WTC11 (cell line): ENCODE measurements at regions of chr12 and their contacts with region 1.

Region 1: GRCh38 chr12:48988030-48988649 is 10.0 kb downstream of the WNT1 start:
- DNase-seq: peak; percentile 91
- ATAC-seq: peak; percentile 89
- H3K4me3 Mint-ChIP-seq: no peak overlapping the region
- H3K27ac Mint-ChIP-seq: no peak overlapping the region
- H3K4me1 Mint-ChIP-seq: peaks cover 10% of the 10 kb centered on the region
- H3K27me3 Mint-ChIP-seq: peaks cover 76% of the 10 kb centered on the region
- CTCF ChIP-seq: peak; percentile 96

Region 2: GRCh38 chr12:48851883-48852733 is 136.0 kb before region 1 on chr12 and contains the start of gene DDX23:
- CTCF ChIA-PET with region 1: interaction called, 24 read pairs
- POLR2A ChIA-PET with region 1: no interaction called
- DNase-seq: peak; percentile 93
- ATAC-seq: peak; percentile 99
- H3K4me3 Mint-ChIP-seq: peak within 1 kb of the TSS; percentile 94
- H3K27ac Mint-ChIP-seq: peak within 1 kb of the TSS; percentile 95
- H3K4me1 Mint-ChIP-seq: peaks cover 20% of the 10 kb centered on the region
- H3K27me3 Mint-ChIP-seq: no peaks in the 10 kb centered on the region
- CTCF ChIP-seq: no peak
- total RNA-seq, gene DDX23: 91.1 to 107 TPM (median 93.4 TPM) in 3 replicates

Region 3: DNA sequence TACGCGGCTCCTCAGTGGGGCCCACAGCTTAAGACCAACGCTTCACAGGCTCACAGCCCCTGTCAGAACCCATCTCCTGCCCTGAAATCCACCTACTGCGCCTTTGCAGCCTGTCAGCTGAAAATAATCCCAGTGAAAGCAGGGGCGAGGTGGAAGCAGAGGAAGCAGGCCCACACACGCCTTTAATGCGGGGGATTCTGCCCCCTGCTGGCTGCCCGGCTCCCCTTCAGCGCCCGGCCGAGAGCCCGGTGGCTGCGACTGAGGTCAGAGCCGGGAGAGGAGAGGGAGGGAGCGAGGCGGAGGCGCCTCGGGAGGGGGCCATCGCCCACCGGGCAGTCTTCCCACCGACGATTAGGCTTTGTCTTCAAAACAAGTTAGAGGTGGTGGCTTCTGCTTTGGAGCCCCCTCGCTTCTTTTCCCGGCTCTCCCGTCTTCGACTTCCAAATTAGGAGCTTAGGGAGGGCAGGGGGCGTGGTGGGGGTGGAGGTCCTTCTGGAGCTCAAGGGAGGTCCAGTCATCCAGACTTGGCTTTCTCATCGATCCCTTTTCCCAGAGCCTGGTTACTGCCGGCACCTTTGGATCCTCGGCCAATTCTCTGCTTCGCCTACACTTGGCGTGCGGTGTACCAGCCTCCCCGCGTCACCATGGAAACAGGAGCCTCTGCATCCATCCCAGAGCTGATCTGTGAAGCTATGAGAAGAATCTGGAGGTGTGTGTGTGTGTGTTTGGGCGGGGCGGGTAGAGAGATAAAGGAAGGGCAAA is 97.3 kb before region 1 on chr12:
- CTCF ChIA-PET with region 1: interaction called, 14 read pairs
- POLR2A ChIA-PET with region 1: no interaction called
- DNase-seq: peak; percentile 92
- ATAC-seq: peak; percentile 95
- H3K4me3 Mint-ChIP-seq: peak overlapping the region; percentile 70
- H3K27ac Mint-ChIP-seq: no peak overlapping the region
- H3K4me1 Mint-ChIP-seq: peaks cover 7% of the 10 kb centered on the region
- H3K27me3 Mint-ChIP-seq: peaks cover 28% of the 10 kb centered on the region
- CTCF ChIP-seq: peak; percentile 92

Region 4: GRCh38 chr12:48936379-48936979 is 51.7 kb before region 1 on chr12:
- CTCF ChIA-PET with region 1: interaction called, 17 read pairs
- POLR2A ChIA-PET with region 1: no interaction called
- DNase-seq: peak; percentile 89
- ATAC-seq: peak; percentile 88
- H3K4me3 Mint-ChIP-seq: no peak overlapping the region
- H3K27ac Mint-ChIP-seq: peak overlapping the region; percentile 46
- H3K4me1 Mint-ChIP-seq: no peaks in the 10 kb centered on the region
- H3K27me3 Mint-ChIP-seq: no peaks in the 10 kb centered on the region
- CTCF ChIP-seq: peak; percentile 70

Region 5: GRCh38 chr12:48977315-48978281 is 10.5 kb before region 1 on chr12:
- CTCF ChIA-PET with region 1: interaction called, 237 read pairs
- POLR2A ChIA-PET with region 1: no interaction called
- DNase-seq: peak; percentile 75
- ATAC-seq: peak; percentile 3
- H3K4me3 Mint-ChIP-seq: peak overlapping the region; percentile 45
- H3K27ac Mint-ChIP-seq: no peak overlapping the region
- H3K4me1 Mint-ChIP-seq: peaks cover 31% of the 10 kb centered on the region
- H3K27me3 Mint-ChIP-seq: peaks cover 100% of the 10 kb centered on the region
- CTCF ChIP-seq: peak; percentile 77; the same call in 1 of the 2 replicates

Region 6: DNA sequence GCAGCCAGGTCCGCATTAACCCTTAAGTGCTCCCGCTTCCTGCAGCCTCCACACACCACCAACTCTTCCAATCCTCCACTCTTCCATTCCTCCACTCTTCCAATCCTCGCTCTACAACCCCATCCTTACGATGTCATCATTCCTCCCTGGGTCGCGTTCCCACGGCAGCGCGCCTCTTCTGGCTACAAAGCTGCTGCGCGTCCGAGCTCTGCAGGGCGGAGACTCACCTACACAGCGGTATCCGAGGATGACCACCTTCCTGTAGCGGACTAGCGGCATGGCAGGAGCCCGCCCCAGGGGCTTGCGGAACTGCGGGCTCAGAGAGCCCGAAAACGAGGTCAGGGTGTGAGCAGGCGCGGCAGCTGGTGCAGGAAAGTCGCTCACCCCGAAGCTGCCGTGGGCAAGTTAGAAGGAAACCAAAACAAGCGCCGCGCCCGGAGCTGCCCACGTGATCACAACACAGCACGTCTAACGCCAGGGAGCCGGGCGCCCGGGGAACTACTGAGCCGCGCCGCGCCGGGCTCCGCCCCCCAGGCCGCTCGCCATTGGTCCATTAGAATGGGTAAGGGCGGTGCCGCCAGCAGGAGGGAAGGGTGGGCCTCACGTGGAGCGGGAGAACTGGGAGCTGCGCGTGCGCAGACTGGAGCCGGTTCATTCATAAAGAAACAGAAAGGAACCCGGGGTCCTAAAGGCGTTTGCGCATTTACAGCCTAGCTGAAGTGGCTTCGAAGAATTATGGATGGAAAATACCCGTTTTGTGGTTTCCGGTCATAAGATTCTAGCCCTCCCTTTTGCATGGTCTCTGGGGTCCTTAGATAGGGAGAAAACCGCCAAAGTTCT is 81.6 kb after region 1 on chr12 and contains the start of gene RHEBL1:
- CTCF ChIA-PET with region 1: interaction called, 13 read pairs
- POLR2A ChIA-PET with region 1: no interaction called
- DNase-seq: peak; percentile 95
- ATAC-seq: peak; percentile 96
- H3K4me3 Mint-ChIP-seq: peak within 1 kb of the TSS; percentile 99
- H3K27ac Mint-ChIP-seq: peak within 1 kb of the TSS; percentile 7; the same call in 1 of the 2 replicates
- H3K4me1 Mint-ChIP-seq: peaks cover 15% of the 10 kb centered on the region
- H3K27me3 Mint-ChIP-seq: peaks cover 20% of the 10 kb centered on the region
- CTCF ChIP-seq: no peak
- total RNA-seq, gene RHEBL1: 6.4 to 9.0 TPM (median 6.9 TPM) in 3 replicates